Mammary epithelial cell (primary cell): ENCODE measurements at regions of chr15 and their contacts with region 1.

Region 1: GRCh38 chr15:66851226-66852071 is 149.4 kb downstream of the SMAD6 start:
- DNase-seq: peak; percentile 28
- H3K4me3 ChIP-seq: no peak overlapping the region
- H3K27ac ChIP-seq: no peak overlapping the region
- H3K4me1 ChIP-seq: peaks cover 3% of the 10 kb centered on the region
- H3K27me3 ChIP-seq: no peaks in the 10 kb centered on the region
- CTCF ChIP-seq: peak; percentile 79 to 95

Region 2: GRCh38 chr15:66603301-66604179 is 247.9 kb before region 1 on chr15:
- CTCF ChIA-PET with region 1: no interaction called
- dilution Hi-C with region 1: no loop called
- in situ Hi-C with region 1: loop called in 1 of 2 experiments (anchors 10 kb)
- intact Hi-C with region 1: loop called (anchors 1 kb)
- DNase-seq: peak; percentile 17
- H3K4me3 ChIP-seq: no peak overlapping the region
- H3K27ac ChIP-seq: no peak overlapping the region
- H3K4me1 ChIP-seq: no peaks in the 10 kb centered on the region
- H3K27me3 ChIP-seq: no peaks in the 10 kb centered on the region
- CTCF ChIP-seq: peak; percentile 51 to 85

Region 3: DNA sequence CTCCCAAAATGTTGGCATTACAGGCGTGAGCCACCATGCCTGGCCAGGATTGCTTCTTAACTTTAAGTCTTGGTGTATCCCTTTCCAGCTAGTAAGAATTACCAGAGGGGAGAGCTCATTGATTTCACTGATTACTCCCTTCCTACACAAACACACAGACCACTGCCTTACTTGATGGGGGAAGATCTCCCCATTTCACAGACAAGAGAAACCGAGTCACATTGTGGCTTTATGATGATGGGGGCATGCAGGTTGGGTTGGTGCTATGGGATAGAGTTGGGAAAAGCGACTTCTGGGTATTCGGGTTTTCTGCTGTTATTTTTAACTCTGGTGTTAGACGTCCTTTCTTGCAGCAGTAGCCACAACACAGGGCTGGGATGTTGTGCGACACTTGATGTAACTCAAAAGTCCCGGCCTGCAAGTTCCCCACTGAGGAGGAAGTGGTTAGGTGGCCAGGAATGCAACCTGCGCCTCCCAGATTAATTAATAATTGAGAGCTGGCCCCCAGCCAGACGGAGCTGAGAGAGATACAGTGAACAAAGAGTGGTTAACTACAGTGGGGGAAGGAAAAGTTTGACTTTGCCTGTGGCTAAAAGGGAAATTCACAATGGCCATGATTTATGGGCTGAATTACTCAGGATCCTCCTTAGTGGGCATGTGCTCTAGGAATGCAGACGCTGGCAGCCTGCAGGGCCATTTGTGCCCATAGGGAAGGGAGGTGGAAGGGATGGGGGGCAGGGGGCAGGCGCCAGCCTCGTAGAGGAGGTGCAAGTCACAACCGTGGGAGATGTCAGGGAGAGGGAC is 85.8 kb before region 1 on chr15:
- CTCF ChIA-PET with region 1: no interaction called
- dilution Hi-C with region 1: loop called (anchors 5 kb)
- in situ Hi-C with region 1: no loop called
- intact Hi-C with region 1: no loop called
- DNase-seq: peak; percentile 86
- H3K4me3 ChIP-seq: no peak overlapping the region
- H3K27ac ChIP-seq: no peak overlapping the region
- H3K4me1 ChIP-seq: peaks cover 46% of the 10 kb centered on the region
- H3K27me3 ChIP-seq: no peaks in the 10 kb centered on the region
- CTCF ChIP-seq: no peak

Region 4: GRCh38 chr15:66789029-66790025 is 62.1 kb before region 1 on chr15:
- CTCF ChIA-PET with region 1: interaction called, 4 read pairs
- dilution Hi-C with region 1: loop called (anchors 5 kb)
- in situ Hi-C with region 1: loop called in 1 of 2 experiments (anchors 10 kb)
- intact Hi-C with region 1: loop called (anchors 1 kb)
- DNase-seq: no peak
- H3K4me3 ChIP-seq: no peak overlapping the region
- H3K27ac ChIP-seq: no peak overlapping the region
- H3K4me1 ChIP-seq: no peaks in the 10 kb centered on the region
- H3K27me3 ChIP-seq: no peaks in the 10 kb centered on the region
- CTCF ChIP-seq: peak; percentile 50 to 63

Region 5: DNA sequence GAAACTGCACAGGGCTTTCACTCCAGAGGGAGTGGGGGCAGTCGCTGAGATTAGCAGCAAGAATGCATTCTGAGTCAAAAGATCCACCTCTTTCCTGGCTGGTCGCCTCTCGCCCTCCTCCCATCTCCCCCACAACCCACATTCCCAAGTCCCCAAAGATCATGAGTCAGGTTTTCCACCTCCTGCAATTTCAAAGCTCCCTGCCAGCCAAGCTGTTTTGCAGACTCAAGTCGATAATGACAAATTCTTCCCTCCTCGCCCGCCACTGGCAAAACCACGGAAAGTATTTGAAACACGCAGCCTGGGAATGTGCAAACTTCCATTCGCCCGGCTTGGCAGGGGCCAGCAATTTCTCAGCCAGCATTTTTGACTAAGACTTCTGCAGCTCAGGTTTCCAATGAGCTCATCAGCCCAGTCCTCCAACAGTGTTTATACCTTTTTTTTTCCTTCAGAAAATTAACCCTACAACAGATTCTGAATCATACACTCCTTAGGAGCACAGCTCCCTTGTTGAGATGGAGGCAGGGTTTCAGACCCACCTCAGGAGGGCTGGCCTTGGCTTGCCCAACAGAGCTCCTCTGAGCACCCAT is 32.0 kb after region 1 on chr15:
- CTCF ChIA-PET with region 1: no interaction called
- dilution Hi-C with region 1: no loop called
- in situ Hi-C with region 1: no loop called
- intact Hi-C with region 1: no loop called
- DNase-seq: peak; percentile 99
- H3K4me3 ChIP-seq: no peak overlapping the region
- H3K27ac ChIP-seq: peak overlapping the region; percentile 41
- H3K4me1 ChIP-seq: peaks cover 36% of the 10 kb centered on the region
- H3K27me3 ChIP-seq: no peaks in the 10 kb centered on the region
- CTCF ChIP-seq: no peak

Region 6: GRCh38 chr15:66901336-66902100 is 50.1 kb after region 1 on chr15:
- CTCF ChIA-PET with region 1: no interaction called
- dilution Hi-C with region 1: no loop called
- in situ Hi-C with region 1: no loop called
- intact Hi-C with region 1: no loop called
- DNase-seq: no peak
- H3K4me3 ChIP-seq: no peak overlapping the region
- H3K27ac ChIP-seq: no peak overlapping the region
- H3K4me1 ChIP-seq: peaks cover 3% of the 10 kb centered on the region
- H3K27me3 ChIP-seq: no peaks in the 10 kb centered on the region
- CTCF ChIP-seq: no peak

Region 7: GRCh38 chr15:67433495-67434099 is 582.1 kb after region 1 on chr15:
- CTCF ChIA-PET with region 1: no interaction called
- dilution Hi-C with region 1: no loop called
- in situ Hi-C with region 1: no loop called
- intact Hi-C with region 1: no loop called
- DNase-seq: peak; percentile 39
- H3K4me3 ChIP-seq: no peak overlapping the region
- H3K27ac ChIP-seq: no peak overlapping the region
- H3K4me1 ChIP-seq: no peaks in the 10 kb centered on the region
- H3K27me3 ChIP-seq: no peaks in the 10 kb centered on the region
- CTCF ChIP-seq: peak; percentile 79 to 83